IMR-90 (cell line): ENCODE measurements at regions of chr20 and their contacts with region 1.

Region 1: DNA sequence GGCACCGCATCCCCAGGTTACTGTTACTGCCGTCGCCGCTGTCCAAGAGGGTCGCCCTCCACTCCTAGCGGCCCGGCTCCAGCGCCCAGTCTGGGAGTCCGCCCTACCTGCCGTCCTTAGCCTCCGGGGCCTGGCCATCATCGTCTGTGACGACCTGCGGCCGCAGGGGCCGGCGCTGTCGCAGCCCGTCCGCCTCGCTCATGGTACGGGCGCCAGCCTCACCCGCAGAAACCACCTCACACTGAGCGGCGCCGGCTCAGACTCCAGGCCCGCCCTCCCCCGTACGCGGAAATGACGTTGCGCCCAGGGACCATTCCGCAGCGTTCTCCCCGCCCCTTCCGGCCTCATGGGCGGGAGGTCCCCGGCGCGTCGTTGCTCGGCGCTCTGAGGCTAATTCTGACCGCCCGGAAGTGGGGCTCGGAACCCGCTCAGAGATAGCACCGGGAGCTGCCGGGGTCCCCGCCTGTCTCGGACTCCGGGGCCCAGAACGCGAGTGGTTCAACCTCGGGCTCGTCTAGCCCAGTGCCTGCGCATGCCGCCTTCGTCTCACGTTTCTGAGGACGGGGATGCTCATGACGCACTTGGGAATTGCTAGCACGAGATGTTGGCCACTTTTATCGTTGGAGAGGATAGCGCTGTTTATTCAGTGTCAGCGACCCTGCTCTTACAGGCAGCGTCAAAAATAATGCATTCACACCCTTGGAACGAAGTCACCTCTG is at the start of gene APMAP:
- DNase-seq: peak; percentile 88
- ATAC-seq: peak; percentile 92
- H3K4me3 ChIP-seq: peak within 1 kb of the TSS; percentile 83
- H3K27ac ChIP-seq: peak within 1 kb of the TSS; percentile 87
- H3K4me1 ChIP-seq: no peaks in the 10 kb centered on the region
- H3K27me3 ChIP-seq: peaks cover 13% of the 10 kb centered on the region
- CTCF ChIP-seq: no peak
- POLR2A ChIP-seq: peak; percentile 96
- RAD21 ChIP-seq: no peak; the same call in 1 of the 2 replicates
- total RNA-seq, gene APMAP: 67.2 TPM in 2 replicates

Region 2: DNA sequence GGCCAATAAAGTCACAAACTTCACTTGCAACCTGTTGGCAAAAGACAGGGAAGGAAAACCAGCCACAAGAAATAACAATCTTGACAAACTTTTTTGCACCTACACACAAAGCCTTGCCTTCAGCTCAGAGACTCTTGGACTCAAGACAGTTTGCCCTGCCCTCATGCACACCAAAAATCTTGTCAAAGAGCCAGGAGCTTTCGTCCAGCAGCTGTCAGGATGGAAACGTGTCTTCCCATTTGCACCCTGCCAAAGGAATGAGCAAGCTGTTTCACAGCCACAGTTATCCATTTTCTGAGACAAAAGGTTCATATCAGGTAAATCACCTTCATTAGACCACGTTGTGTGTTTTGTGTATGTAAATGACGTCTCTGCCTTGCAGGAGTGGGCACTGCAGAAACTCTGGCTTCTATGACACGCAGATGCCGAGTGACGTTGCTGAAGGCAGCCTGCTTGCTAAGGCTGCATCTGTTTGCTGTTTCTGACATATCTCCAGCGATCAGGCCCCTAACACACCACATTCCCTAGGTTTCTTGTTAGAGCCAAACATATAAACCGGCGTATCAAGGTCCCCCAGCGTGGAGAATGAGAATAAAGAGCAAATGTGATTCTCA is 329.8 kb before region 1 on chr20:
- CTCF ChIA-PET with region 1: no interaction called
- POLR2A ChIA-PET with region 1: no interaction called
- dilution Hi-C with region 1: no loop called
- in situ Hi-C with region 1: no loop called
- intact Hi-C with region 1: no loop called
- DNase-seq: peak; percentile 48
- ATAC-seq: peak; percentile 37; the same call in 1 of the 2 replicates
- H3K4me3 ChIP-seq: no peak overlapping the region
- H3K27ac ChIP-seq: no peak overlapping the region
- H3K4me1 ChIP-seq: peaks cover 4% of the 10 kb centered on the region; the same call in 1 of the 2 replicates
- H3K27me3 ChIP-seq: peaks cover 22% of the 10 kb centered on the region
- CTCF ChIP-seq: no peak
- POLR2A ChIP-seq: no peak
- RAD21 ChIP-seq: no peak

Region 3: DNA sequence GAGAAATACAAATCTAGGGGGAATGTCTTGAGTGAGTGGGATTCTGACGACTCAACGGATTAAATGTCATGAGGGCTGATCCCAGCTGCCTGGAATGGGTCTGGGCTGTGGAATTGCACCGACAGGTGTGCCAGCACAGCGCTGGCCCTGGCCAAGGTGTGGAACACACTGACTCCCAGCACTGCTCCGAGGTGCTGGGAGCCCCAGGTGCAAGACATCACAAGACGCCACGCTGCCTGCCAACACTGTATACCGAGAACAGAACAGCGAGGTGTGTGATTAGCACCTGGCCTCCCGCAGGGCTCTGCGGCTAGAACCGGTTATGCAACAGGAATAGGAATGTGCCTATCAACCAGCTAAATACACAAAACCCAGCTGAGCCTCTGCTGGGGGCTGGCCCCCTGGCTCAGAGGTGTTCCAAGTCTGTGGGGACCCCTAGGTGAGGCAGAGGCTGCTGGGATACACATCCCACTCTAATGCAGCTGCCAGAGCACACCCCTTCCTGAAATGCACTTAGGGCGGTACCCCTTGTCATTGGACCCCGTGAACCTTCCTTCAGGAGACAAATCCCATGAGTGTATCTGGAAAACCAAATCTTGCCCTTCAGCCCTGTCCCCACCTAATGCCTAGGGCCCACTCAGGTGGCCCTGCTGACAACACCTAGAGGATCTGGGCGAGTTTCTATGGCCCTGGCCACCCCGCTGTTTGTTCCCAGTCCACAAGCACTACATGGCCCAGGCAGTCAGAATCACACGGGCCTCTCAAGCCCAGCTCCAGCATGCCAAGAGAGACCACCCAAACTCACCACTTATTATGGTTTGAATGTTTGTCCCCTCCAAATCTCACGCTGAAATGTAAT is 24.8 kb after region 1 on chr20:
- CTCF ChIA-PET with region 1: no interaction called
- POLR2A ChIA-PET with region 1: no interaction called
- dilution Hi-C with region 1: no loop called
- in situ Hi-C with region 1: no loop called
- intact Hi-C with region 1: no loop called
- DNase-seq: no peak
- ATAC-seq: no peak
- H3K4me3 ChIP-seq: no peak overlapping the region
- H3K27ac ChIP-seq: no peak overlapping the region
- H3K4me1 ChIP-seq: peaks cover 2% of the 10 kb centered on the region; the same call in 1 of the 2 replicates
- H3K27me3 ChIP-seq: peaks cover 3% of the 10 kb centered on the region; the same call in 1 of the 2 replicates
- CTCF ChIP-seq: no peak
- POLR2A ChIP-seq: no peak
- RAD21 ChIP-seq: no peak

Region 4: DNA sequence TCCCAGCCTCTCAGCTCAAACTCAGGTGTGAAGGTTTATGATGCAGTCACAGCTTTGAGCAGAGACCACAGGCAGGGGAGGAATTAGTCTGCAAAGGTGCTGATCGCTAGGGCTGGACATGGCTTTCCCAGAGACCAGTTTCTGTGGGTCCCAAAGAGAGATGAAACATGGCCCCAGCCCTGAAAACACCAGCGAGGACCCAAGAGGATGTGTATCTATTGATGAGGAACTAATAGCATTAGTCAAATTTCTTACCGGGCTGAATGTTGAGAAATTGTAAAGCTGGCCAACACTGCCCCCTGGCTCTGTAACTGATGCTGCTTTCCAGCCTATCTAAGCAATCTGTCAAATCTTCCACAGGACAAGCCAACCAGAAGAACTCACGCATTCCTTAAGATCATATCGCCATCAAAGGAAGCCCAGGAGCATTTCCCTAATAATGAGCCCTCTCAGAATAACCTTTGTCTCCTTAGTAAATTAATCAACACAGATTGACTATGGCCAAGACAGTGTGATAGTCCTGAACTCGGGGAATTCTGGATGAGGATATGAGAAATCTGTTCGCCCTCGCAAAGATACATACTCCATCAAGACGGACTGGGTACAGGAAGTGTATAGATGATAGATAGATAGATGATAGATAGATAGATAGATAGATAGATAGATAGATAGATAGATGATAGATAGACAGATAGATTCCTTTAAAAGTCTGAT is 73.1 kb after region 1 on chr20:
- CTCF ChIA-PET with region 1: interaction called, 28 read pairs
- POLR2A ChIA-PET with region 1: no interaction called
- dilution Hi-C with region 1: no loop called
- in situ Hi-C with region 1: loop called (anchors 5 kb)
- intact Hi-C with region 1: loop called (anchors 1 kb)
- DNase-seq: peak; percentile 52
- ATAC-seq: peak; percentile 70
- H3K4me3 ChIP-seq: no peak overlapping the region
- H3K27ac ChIP-seq: no peak overlapping the region
- H3K4me1 ChIP-seq: no peaks in the 10 kb centered on the region
- H3K27me3 ChIP-seq: peaks cover 60% of the 10 kb centered on the region
- CTCF ChIP-seq: peak; percentile 72
- POLR2A ChIP-seq: no peak
- RAD21 ChIP-seq: peak; percentile 77

Region 5: GRCh38 chr20:25195014-25195961 is 202.6 kb after region 1 on chr20 and contains the start of gene ENTPD6:
- CTCF ChIA-PET with region 1: no interaction called
- POLR2A ChIA-PET with region 1: no interaction called
- dilution Hi-C with region 1: no loop called
- in situ Hi-C with region 1: loop called (anchors 5 kb)
- intact Hi-C with region 1: no loop called
- DNase-seq: peak; percentile 81
- ATAC-seq: peak; percentile 93
- H3K4me3 ChIP-seq: peak within 1 kb of the TSS; percentile 90
- H3K27ac ChIP-seq: peak within 1 kb of the TSS; percentile 66
- H3K4me1 ChIP-seq: peaks cover 7% of the 10 kb centered on the region
- H3K27me3 ChIP-seq: peaks cover 10% of the 10 kb centered on the region; the same call in 1 of the 2 replicates
- CTCF ChIP-seq: 0 out of 2 replicates have a peak, but pooled peaks have one; percentile 23
- POLR2A ChIP-seq: peak; percentile 69
- RAD21 ChIP-seq: peak; percentile 20
- total RNA-seq, gene ENTPD6: 53.6 and 61.1 TPM in 2 replicates

Region 6: DNA sequence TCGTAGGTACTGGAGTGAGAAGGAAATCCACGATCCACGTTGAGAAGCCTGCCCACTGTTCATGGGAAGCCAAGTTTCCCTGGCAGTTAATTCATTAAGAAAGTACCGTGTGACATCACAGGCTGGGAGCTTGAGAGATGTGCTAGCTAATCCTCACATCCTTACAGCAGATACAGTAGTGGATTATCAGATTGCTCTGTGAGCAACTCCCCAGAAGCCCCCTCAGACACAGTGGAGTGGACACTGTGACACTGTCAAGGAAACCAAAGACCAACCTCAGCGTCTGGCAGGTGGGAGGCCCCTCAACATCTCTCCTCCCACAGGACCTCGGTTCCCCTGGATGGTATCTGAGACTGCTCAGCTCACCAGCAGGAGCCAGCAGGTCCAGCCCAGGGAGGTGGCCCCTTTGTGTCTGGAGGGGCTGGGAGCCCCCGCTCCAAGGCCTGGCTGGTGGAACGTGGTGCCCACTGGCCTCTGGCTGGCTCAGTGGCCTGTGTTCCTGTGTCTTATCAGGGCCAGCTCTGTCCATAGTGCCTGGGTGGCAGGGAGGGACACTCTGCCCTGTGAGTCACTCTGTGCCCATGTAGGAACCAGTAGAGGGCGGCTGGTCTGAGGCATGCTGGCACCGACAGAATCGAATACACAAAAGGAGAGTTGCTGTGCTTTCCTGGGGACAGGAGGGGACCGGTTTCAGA is 262.5 kb after region 1 on chr20:
- CTCF ChIA-PET with region 1: no interaction called
- POLR2A ChIA-PET with region 1: no interaction called
- dilution Hi-C with region 1: no loop called
- in situ Hi-C with region 1: loop called (anchors 10 kb)
- intact Hi-C with region 1: no loop called
- DNase-seq: no peak
- ATAC-seq: no peak; the same call in 1 of the 2 replicates
- H3K4me3 ChIP-seq: no peak overlapping the region
- H3K27ac ChIP-seq: no peak overlapping the region
- H3K4me1 ChIP-seq: peaks cover 10% of the 10 kb centered on the region
- H3K27me3 ChIP-seq: no peaks in the 10 kb centered on the region
- CTCF ChIP-seq: no peak
- POLR2A ChIP-seq: no peak
- RAD21 ChIP-seq: no peak

Region 7: GRCh38 chr20:25399037-25399430 is 406.4 kb after region 1 on chr20:
- CTCF ChIA-PET with region 1: interaction called, 4 read pairs
- POLR2A ChIA-PET with region 1: no interaction called
- dilution Hi-C with region 1: no loop called
- in situ Hi-C with region 1: loop called (anchors 5 kb)
- intact Hi-C with region 1: loop called (anchors 1 kb)
- DNase-seq: peak; percentile 83
- ATAC-seq: peak; percentile 98
- H3K4me3 ChIP-seq: no peak overlapping the region
- H3K27ac ChIP-seq: no peak overlapping the region
- H3K4me1 ChIP-seq: peaks cover 5% of the 10 kb centered on the region; the same call in 1 of the 2 replicates
- H3K27me3 ChIP-seq: no peaks in the 10 kb centered on the region
- CTCF ChIP-seq: peak; percentile 85
- POLR2A ChIP-seq: no peak
- RAD21 ChIP-seq: peak; percentile 86

Region 8: DNA sequence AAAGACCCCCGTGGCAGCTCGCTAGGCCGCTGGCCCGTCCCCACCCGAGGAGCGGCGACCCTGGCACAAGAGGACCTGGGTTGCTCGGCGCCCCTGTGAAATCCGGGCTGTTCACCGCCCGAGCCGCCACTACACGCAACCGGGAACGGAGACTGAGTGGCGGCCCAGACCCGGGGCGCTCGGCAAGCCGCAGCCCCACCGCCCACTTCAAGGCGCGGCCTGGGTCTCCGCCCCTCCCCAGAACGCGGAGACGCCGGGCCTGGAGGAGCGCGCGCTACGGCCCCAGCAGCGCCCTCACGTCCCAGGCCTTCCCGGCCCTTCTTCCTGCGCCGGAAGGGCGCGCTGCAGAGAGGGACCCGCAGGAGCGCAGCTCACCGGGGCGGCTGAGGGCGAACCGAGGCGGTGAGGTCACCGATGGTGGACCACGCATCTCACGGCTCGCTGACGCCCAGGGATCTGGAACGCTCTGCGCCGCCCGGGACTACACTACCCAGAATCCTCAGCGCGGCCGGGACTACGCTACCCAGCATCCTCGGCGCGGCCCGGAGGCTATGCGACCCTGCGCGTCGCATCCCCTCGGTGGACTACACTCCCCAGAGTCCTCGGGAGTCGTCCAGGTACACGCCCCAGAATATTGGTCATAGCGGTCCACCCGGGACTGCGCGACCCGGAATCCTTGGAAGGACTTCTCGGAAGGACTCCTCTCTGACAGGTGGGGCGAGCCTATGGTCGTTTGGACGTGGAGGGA is 703.9 kb after region 1 on chr20 and contains the start of gene ZNF337:
- CTCF ChIA-PET with region 1: no interaction called
- POLR2A ChIA-PET with region 1: no interaction called
- dilution Hi-C with region 1: no loop called
- in situ Hi-C with region 1: loop called (anchors 25 kb)
- intact Hi-C with region 1: no loop called
- DNase-seq: peak; percentile 91
- ATAC-seq: peak; percentile 99
- H3K4me3 ChIP-seq: peak within 1 kb of the TSS; percentile 61
- H3K27ac ChIP-seq: peak within 1 kb of the TSS; percentile 69
- H3K4me1 ChIP-seq: peaks cover 5% of the 10 kb centered on the region
- H3K27me3 ChIP-seq: no peaks in the 10 kb centered on the region
- CTCF ChIP-seq: peak; percentile 35; the same call in 1 of the 2 replicates
- POLR2A ChIP-seq: peak; percentile 86
- RAD21 ChIP-seq: peak; percentile 32
- total RNA-seq, gene ZNF337: 15.8 and 16.5 TPM in 2 replicates